CD4-positive, alpha-beta T cell (primary cell): ENCODE measurements at regions of chr1 and their contacts with region 1.

Region 1: DNA sequence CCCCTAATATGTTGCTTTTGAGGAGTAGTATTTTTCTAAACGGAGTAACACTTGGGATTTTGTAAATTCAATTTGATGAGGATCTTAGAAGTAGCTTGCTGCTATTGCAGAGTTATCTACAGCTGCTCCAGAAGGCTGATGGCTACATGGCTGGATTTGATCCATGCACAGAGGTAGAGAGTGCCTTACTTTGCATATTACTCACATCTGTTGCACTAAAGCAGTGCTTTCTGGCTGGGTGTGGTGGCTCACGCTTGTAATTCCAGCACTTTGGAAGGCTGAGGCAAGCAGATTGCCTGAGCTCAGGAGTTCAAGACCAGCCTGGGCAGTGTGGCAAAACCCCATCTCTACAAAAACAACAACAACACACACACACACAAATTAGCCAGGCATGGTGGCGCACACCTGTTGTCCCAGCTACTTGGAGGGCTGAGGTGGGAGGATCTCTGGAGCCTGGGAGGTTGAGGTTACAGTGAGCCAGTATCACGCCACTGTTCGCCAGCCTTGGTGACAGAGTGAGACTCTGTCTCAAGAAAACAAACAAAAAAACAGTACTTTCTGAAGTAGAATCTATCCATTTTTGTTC is 24.6 kb downstream of the RALGPS2 start:
- DNase-seq: no peak
- ATAC-seq: no peak
- H3K4me3 ChIP-seq: no peak overlapping the region
- H3K4me3 Mint-ChIP-seq: no peak overlapping the region
- H3K27ac ChIP-seq: no peak overlapping the region
- H3K27ac Mint-ChIP-seq: no peak overlapping the region
- H3K4me1 ChIP-seq: no peaks in the 10 kb centered on the region
- H3K4me1 Mint-ChIP-seq: peaks cover 4% of the 10 kb centered on the region
- H3K27me3 ChIP-seq: no peaks in the 10 kb centered on the region
- H3K27me3 Mint-ChIP-seq: no peaks in the 10 kb centered on the region
- CTCF ChIP-seq: no peak

Region 2: GRCh38 chr1:178310685-178311105 is 439.0 kb before region 1 on chr1:
- CTCF ChIA-PET with region 1: no interaction called
- POLR2A ChIA-PET with region 1: no interaction called
- intact Hi-C with region 1: loop called (anchors 5 to 10 kb)
- DNase-seq: peak in 3 of 14 experiments; percentile 36 to 40 (median 40)
- ATAC-seq: no peak
- H3K4me3 ChIP-seq: no peak overlapping the region
- H3K4me3 Mint-ChIP-seq: no peak overlapping the region
- H3K27ac ChIP-seq: no peak overlapping the region
- H3K27ac Mint-ChIP-seq: no peak overlapping the region
- H3K4me1 ChIP-seq: no peaks in the 10 kb centered on the region
- H3K4me1 Mint-ChIP-seq: no peaks in the 10 kb centered on the region
- H3K27me3 ChIP-seq: no peaks in the 10 kb centered on the region
- H3K27me3 Mint-ChIP-seq: peaks cover 6% of the 10 kb centered on the region
- CTCF ChIP-seq: peak; percentile 57

Region 3: DNA sequence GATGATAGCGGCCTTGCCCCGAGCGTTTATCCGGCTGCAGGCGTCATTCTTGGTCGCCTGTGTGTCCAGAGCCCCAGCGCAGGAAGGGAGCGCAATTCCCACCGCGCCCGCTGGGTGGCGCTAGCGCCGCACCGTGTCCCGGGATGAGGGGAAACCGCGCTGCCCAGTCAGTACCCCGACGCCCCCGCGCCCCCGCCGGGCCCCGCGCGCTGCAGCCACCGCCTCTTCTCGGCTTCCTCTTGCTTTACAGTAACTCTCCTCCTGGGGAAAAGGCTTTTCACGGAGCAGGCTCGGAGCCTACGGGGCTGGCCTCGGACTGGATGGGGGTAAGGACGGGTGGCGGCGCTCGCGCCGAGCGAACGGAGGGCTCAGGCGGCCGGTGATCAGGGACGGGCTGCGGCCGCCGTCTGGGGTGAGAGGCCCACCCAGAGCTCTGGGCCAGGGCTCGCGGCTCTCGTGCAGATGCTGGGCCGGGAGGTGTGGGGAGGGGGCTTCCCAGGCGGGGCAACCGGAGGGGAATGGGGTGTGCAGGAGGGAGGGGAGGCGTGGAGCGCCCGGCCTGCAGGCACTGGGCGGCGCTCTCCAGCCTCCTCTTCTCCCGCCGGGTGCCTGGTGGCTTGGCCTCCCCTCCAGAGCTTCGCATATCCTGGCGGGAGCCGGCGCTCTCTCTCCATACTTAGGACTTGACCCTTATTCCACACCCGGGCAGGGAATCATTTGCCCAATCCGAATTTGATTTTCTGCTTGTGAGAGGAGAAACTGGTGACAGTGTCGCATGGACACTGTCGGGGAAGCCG is 206.9 kb before region 1 on chr1:
- CTCF ChIA-PET with region 1: interaction called, 3 read pairs
- POLR2A ChIA-PET with region 1: no interaction called
- intact Hi-C with region 1: loop called (anchors 1 kb)
- DNase-seq: peak; percentile 59 to 91 (median 84)
- ATAC-seq: peak; percentile 90
- H3K4me3 ChIP-seq: peak overlapping the region; percentile 77
- H3K4me3 Mint-ChIP-seq: peak overlapping the region; percentile 93
- H3K27ac ChIP-seq: no peak overlapping the region
- H3K27ac Mint-ChIP-seq: peak overlapping the region; percentile 39
- H3K4me1 ChIP-seq: peaks cover 16% of the 10 kb centered on the region
- H3K4me1 Mint-ChIP-seq: peaks cover 10% of the 10 kb centered on the region
- H3K27me3 ChIP-seq: no peaks in the 10 kb centered on the region
- H3K27me3 Mint-ChIP-seq: no peaks in the 10 kb centered on the region
- CTCF ChIP-seq: peak; percentile 99